Mammary epithelial cell (primary cell): ENCODE measurements at regions of chr19 and their contacts with region 1.

Region 1: DNA sequence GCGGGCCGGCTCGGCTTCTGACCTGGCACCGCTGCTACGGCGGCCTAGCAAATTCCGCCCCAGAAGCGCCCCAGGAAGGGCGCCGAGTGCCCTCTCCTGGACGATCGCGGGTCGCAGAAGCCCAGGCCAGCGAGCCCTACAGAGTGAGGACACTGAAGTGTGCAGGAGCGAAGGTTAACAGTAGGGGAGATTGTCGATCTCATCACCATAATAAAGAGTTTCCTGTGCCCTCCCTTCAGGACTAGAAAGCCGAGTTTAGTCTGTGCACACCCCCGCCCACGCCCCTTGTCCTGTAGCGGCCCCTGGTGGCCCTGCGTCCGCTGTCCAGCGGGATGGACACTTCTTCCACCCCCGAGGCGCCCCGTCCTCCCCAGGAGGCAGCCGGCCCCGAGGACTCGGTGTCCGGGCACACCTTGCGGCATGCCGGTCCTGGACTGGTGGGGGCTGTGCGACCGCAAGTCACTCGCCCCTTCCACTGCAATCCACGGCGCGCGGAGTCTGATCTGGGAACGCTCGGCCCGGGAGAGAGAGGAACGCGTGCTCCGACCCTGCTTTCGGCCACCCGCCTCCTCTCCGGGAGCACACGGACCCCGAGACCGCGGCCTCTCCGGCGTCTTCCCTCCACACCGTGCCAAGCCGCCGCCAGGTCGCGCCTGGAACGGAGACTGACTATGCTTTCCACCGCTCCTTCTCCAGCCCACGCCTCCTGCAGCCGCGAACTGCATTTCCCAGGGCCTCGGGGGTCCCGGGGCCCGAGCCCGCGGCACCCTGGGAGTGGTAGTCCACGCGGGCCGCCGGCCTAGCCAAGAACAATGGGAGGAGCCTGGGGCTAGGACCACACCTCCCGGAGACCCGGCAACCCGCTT is 769 bp upstream of the KMT2B start:
- DNase-seq: peak; percentile 79
- H3K4me3 ChIP-seq: peak overlapping the region; percentile 90 to 94 (median 91)
- H3K27ac ChIP-seq: peak overlapping the region; percentile 52
- H3K4me1 ChIP-seq: peaks cover 23% of the 10 kb centered on the region
- H3K27me3 ChIP-seq: no peaks in the 10 kb centered on the region
- CTCF ChIP-seq: peak; percentile 55 to 79

Region 2: DNA sequence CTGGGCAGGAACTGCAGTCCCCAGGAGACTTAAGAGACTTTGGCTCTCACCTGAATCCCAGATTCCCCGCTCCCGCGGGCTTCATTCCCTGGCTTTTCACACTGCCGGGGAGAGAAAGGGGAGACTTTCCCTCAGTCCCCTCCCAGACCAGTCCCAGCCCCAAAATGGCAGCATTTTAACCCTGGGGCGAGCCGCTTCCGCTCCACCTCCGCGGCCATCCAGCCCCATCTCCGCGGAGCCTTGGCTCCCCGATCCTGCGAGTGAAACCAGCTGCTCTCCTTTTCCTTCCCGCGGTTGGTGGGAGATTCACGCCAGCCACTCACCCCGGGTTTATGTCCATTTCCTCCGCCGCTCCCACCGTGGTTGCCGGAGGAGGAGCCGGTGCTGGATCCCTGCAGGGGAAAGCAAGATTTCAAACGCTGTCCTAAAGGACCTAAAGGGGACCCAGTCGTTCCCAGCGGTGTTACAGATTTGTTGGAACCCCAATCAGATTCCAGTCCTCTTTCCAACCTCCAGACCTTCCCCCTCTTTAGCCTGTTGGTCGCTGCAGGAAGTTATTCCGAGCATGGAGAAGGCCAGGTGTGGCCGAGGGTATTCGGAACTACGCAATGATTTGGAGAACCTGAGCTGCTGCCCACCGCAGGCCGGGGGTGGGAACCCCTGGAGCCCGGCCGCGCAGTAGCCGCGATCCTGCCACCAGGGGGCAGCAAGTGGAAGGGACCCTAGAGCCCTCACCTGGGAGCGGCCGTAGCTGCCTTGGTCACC is 207.0 kb before region 1 on chr19:
- CTCF ChIA-PET with region 1: interaction called, 3 read pairs
- dilution Hi-C with region 1: no loop called
- in situ Hi-C with region 1: loop called in 1 of 2 experiments (anchors 10 kb)
- intact Hi-C with region 1: loop called (anchors 2 kb)
- DNase-seq: peak; percentile 82
- H3K4me3 ChIP-seq: peak overlapping the region; percentile 52 to 75 (median 75)
- H3K27ac ChIP-seq: peak overlapping the region; percentile 95
- H3K4me1 ChIP-seq: peaks cover 21% of the 10 kb centered on the region
- H3K27me3 ChIP-seq: no peaks in the 10 kb centered on the region
- CTCF ChIP-seq: peak; percentile 88 to 98

Region 3: GRCh38 chr19:35612559-35613321 is 104.3 kb before region 1 on chr19 and contains the start of gene HAUS5:
- CTCF ChIA-PET with region 1: no interaction called
- dilution Hi-C with region 1: no loop called
- in situ Hi-C with region 1: no loop called
- intact Hi-C with region 1: loop called (anchors 1 kb)
- DNase-seq: peak; percentile 93
- H3K4me3 ChIP-seq: peak within 1 kb of the TSS; percentile 70 to 74 (median 73)
- H3K27ac ChIP-seq: peak within 1 kb of the TSS; percentile 85
- H3K4me1 ChIP-seq: peaks cover 4% of the 10 kb centered on the region
- H3K27me3 ChIP-seq: no peaks in the 10 kb centered on the region
- CTCF ChIP-seq: no peak
- total RNA-seq, gene HAUS5: 6.5 to 28.0 TPM

Region 4: DNA sequence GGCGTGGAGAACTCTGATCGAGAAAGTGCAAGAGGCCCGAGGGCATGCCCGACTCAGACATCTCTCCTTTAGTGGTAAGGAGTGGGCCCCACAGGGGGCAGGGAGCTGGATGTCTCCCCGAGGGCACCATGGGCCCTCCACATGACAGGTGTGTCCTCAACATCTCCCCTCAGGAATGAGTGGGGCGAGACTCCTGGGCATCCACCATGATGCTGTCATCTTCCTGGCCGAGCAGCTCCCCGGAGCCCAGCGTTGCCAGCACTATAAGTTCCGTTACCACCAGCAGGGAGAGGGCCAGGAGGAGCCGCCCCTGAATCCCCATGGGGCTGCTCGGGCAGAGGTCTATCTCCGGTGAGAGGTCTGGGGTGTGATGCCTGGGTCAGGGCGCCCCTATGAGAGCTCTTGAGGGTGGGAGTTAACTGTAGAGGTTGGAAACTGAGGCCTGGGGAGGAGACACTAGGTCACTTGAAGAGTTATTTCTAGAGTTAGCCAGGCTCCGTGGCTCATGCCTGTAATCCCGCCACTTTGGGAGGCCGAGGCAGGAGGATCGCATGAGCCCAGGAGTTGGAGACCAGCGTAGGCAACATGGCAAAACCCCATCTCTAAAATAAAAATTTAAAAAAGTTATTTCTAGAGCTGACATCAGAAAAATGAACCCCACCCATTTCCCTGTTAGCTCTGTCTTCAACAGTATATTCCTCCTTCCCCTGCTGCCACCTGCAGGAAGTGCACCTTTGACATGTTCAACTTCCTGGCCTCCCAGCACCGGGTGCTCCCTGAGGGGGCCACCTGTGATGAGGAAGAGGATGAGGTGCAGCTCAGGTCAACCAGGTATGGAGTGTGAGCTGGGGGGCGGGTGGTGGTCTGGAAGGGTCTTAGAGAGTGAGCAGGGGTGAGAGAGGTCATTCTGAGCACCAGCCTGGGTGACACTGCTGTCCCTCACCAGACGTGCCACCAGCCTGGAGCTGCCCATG is 20.2 kb after region 1 on chr19:
- CTCF ChIA-PET with region 1: no interaction called
- dilution Hi-C with region 1: no loop called
- in situ Hi-C with region 1: no loop called
- intact Hi-C with region 1: no loop called
- DNase-seq: no peak
- H3K4me3 ChIP-seq: no peak overlapping the region
- H3K27ac ChIP-seq: no peak overlapping the region
- H3K4me1 ChIP-seq: peaks cover 9% of the 10 kb centered on the region
- H3K27me3 ChIP-seq: no peaks in the 10 kb centered on the region
- CTCF ChIP-seq: peak in 1 of 2 donors; percentile 12

Region 5: GRCh38 chr19:35748106-35749020 is 31.3 kb after region 1 on chr19 and contains the start of gene LIN37:
- CTCF ChIA-PET with region 1: no interaction called
- dilution Hi-C with region 1: no loop called
- in situ Hi-C with region 1: no loop called
- intact Hi-C with region 1: loop called (anchors 1 kb)
- DNase-seq: peak; percentile 99
- H3K4me3 ChIP-seq: peak within 1 kb of the TSS; percentile 68 to 97 (median 86)
- H3K27ac ChIP-seq: peak within 1 kb of the TSS; percentile 64
- H3K4me1 ChIP-seq: peaks cover 13% of the 10 kb centered on the region
- H3K27me3 ChIP-seq: no peaks in the 10 kb centered on the region
- CTCF ChIP-seq: peak in 1 of 2 donors; percentile 7
- total RNA-seq, gene LIN37: 13.6 to 14.5 TPM

Region 6: GRCh38 chr19:35757749-35758608 is 40.9 kb after region 1 on chr19 and contains the start of gene PROSER3:
- CTCF ChIA-PET with region 1: no interaction called
- dilution Hi-C with region 1: no loop called
- in situ Hi-C with region 1: no loop called
- intact Hi-C with region 1: loop called (anchors 1 kb)
- DNase-seq: peak; percentile 99
- H3K4me3 ChIP-seq: peak within 1 kb of the TSS; percentile 71 to 83 (median 76)
- H3K27ac ChIP-seq: peak within 1 kb of the TSS; percentile 91
- H3K4me1 ChIP-seq: peaks cover 19% of the 10 kb centered on the region
- H3K27me3 ChIP-seq: no peaks in the 10 kb centered on the region
- CTCF ChIP-seq: no peak
- total RNA-seq, gene PROSER3: 9.7 to 48.3 TPM

Region 7: GRCh38 chr19:35775298-35776110 is 58.5 kb after region 1 on chr19 and contains the start of gene ARHGAP33:
- CTCF ChIA-PET with region 1: no interaction called
- dilution Hi-C with region 1: no loop called
- in situ Hi-C with region 1: no loop called
- intact Hi-C with region 1: no loop called
- DNase-seq: peak; percentile 93
- H3K4me3 ChIP-seq: peak within 1 kb of the TSS; percentile 35 to 70 (median 68)
- H3K27ac ChIP-seq: no peak within 1 kb of the TSS
- H3K4me1 ChIP-seq: no peaks in the 10 kb centered on the region
- H3K27me3 ChIP-seq: no peaks in the 10 kb centered on the region
- CTCF ChIP-seq: no peak
- total RNA-seq, gene ARHGAP33: 0.33 to 11.6 TPM

Region 8: DNA sequence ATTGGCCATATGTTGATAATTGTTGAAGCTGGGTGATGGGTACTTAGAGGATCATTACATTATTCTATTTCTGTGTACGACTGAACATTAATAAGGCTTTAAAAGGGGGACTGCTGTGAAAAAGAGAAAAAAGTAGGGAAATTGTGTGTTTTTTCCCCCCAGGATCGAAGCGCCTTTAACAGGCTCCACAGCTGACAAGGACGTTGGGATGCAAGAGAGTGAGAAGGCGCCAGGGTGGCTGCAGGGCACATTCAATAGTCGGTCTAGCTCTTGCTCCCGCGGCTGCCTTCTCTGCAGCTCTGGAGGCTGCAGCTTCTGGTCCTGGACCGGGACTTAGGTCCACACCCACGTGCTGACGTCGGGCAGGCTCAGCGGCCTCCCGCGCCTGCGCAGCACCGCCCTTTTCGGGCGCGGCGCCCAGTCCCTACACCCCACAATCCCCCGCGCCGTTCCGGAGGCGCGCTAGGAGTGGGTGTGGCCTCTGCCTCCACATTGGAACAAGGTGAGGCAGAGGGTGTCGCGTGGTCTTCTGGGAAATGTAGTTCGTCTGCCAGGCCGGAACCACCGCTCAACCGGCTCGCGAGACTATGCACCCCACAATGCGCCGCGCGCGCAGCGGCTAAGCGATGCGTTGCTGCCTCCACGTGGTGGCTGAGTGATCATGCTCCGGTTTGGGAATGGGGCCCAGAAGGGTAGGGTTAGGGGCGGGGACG is 214.3 kb after region 1 on chr19:
- CTCF ChIA-PET with region 1: no interaction called
- dilution Hi-C with region 1: no loop called
- in situ Hi-C with region 1: no loop called
- intact Hi-C with region 1: loop called (anchors 1 kb)
- DNase-seq: peak; percentile 99
- H3K4me3 ChIP-seq: peak overlapping the region; percentile 23 to 43 (median 37)
- H3K27ac ChIP-seq: no peak overlapping the region
- H3K4me1 ChIP-seq: peaks cover 8% of the 10 kb centered on the region
- H3K27me3 ChIP-seq: no peaks in the 10 kb centered on the region
- CTCF ChIP-seq: peak; percentile 77 to 97